A549 (cell line): ENCODE measurements at regions of chr20 and their contacts with region 1.

Region 1: DNA sequence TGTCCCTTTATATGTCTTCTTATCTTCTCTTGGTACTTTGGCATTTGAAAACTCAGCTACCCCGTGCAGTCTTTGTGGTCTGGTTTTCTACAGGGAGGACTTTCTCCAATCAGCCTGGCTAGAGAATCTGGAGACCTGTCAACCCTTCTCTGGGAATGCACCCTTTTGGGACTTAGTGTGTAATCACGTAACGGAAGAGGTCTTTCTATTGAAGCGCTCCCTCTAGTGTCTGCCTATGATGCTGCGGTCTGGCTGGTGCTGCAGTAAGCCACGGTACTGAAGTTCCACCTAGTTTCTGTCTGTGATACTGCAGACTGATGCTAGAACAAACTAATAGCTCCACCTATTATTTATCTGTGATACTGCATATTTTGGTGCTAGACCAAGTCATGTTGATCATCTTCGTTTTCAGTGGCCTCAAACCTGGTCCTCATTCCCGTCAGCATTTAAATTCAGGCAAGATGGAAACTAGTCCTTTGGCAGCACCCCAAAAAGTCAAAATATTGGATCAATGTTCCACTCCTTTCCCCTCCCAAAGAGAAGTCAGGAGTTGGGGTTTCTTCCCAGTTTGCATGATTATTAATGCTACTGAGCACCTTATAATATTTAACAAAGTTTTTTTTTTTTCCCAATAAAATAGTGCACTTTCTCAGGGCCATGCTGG is 12.5 kb upstream of the SIRPB2 start:
- DNase-seq: peak; percentile 95
- ATAC-seq: peak; percentile 98 to 100
- H3K4me3 ChIP-seq: no peak overlapping the region
- H3K27ac ChIP-seq: no peak overlapping the region
- H3K4me1 ChIP-seq: peaks cover 9% of the 10 kb centered on the region; the same call in 1 of the 3 replicates
- CTCF ChIP-seq: peak; percentile 100
- EP300 ChIP-seq: no peak
- POLR2A ChIP-seq: no peak
- RAD21 ChIP-seq: peak; percentile 98 to 99

Region 2: DNA sequence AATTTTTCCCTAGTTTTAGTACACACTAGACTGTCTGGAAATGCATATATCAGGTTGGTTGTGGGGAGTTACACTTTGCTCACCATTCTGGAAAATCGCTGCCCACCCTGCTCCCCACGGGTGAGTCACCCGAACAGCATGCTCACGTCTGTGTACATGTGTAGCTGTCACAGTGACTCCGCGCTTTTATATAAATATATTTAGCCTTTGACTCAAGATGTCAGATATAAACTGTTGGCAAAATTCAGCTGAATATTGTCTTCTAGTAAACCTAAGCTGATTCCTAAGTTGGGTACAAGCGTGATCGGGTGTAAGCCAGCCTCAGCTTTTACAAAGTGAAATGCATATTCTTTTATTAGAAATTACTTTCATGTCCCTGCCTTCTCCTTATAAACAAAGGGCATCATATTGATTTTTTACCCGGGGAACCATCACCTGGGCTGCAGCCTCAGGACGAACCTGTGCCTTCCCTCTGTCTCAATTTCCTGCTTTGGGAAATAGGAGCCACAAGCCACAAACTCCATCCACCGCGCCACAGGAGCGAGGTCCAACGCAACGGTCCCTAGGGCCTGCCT is 179.0 kb before region 1 on chr20:
- CTCF ChIA-PET with region 1: interaction called, 16 read pairs
- POLR2A ChIA-PET with region 1: interaction called, 3 read pairs
- DNase-seq: peak; percentile 42 to 64
- ATAC-seq: peak; percentile 45 to 48
- H3K4me3 ChIP-seq: peak overlapping the region; percentile 97
- H3K27ac ChIP-seq: peak overlapping the region; percentile 97 to 99
- H3K4me1 ChIP-seq: peaks cover 37% of the 10 kb centered on the region
- CTCF ChIP-seq: no peak
- EP300 ChIP-seq: no peak
- POLR2A ChIP-seq: no peak
- RAD21 ChIP-seq: no peak

Region 3: GRCh38 chr20:1381753-1382591 is 121.7 kb before region 1 on chr20:
- CTCF ChIA-PET with region 1: interaction called, 16 read pairs
- POLR2A ChIA-PET with region 1: no interaction called
- DNase-seq: no peak
- ATAC-seq: no peak
- H3K4me3 ChIP-seq: no peak overlapping the region
- H3K27ac ChIP-seq: no peak overlapping the region
- H3K4me1 ChIP-seq: peaks cover 29% of the 10 kb centered on the region; the same call in 2 of the 3 replicates
- CTCF ChIP-seq: no peak
- EP300 ChIP-seq: no peak
- POLR2A ChIP-seq: no peak
- RAD21 ChIP-seq: no peak

Region 4: DNA sequence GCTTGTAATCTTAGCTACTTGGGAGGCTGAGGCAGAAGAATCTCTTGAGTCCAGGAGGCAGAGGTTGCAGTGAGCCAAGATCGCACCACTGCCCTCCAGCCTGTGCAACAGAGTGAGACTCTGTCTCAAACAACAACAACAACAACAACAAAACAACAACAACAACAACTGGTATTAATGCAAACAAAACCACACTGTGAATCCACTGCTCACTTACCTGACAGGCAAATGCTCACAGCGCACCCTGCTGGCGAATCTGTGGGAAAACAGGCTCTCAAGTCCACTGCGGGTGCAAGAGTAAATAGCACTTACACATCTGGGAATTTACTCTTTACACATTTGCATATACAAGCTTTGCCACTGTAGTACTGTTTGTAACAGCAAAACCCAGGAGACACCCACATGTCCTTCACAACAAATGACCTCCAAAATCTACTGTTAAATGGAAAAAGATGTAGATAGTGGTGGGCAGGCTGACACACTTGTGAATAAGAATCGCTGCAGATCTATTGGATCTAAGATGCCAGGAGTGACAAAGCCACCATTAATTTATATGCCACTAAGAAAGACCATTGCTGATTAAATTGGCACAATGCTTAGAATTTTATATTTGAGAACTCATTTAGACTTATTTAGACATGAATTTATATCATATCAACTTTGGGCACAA is 66.3 kb before region 1 on chr20:
- CTCF ChIA-PET with region 1: interaction called, 29 read pairs
- POLR2A ChIA-PET with region 1: no interaction called
- DNase-seq: peak; percentile 85 to 91
- ATAC-seq: peak; percentile 68 to 83; a peak in 4 of 6 replicates
- H3K4me3 ChIP-seq: no peak overlapping the region
- H3K27ac ChIP-seq: no peak overlapping the region
- H3K4me1 ChIP-seq: no peaks in the 10 kb centered on the region
- CTCF ChIP-seq: peak; percentile 96
- EP300 ChIP-seq: no peak
- POLR2A ChIP-seq: no peak
- RAD21 ChIP-seq: peak; percentile 86 to 90

Region 5: GRCh38 chr20:1474825-1475603 is 28.7 kb before region 1 on chr20:
- CTCF ChIA-PET with region 1: interaction called, 306 read pairs
- POLR2A ChIA-PET with region 1: no interaction called
- DNase-seq: peak in 1 of 2 experiments; percentile 38
- ATAC-seq: peak; percentile 26 to 35; a peak in 3 of 6 replicates
- H3K4me3 ChIP-seq: no peak overlapping the region
- H3K27ac ChIP-seq: no peak overlapping the region
- H3K4me1 ChIP-seq: peaks cover 32% of the 10 kb centered on the region
- CTCF ChIP-seq: peak; percentile 39
- EP300 ChIP-seq: no peak
- POLR2A ChIP-seq: no peak
- RAD21 ChIP-seq: peak; percentile 50 to 68

Region 6: DNA sequence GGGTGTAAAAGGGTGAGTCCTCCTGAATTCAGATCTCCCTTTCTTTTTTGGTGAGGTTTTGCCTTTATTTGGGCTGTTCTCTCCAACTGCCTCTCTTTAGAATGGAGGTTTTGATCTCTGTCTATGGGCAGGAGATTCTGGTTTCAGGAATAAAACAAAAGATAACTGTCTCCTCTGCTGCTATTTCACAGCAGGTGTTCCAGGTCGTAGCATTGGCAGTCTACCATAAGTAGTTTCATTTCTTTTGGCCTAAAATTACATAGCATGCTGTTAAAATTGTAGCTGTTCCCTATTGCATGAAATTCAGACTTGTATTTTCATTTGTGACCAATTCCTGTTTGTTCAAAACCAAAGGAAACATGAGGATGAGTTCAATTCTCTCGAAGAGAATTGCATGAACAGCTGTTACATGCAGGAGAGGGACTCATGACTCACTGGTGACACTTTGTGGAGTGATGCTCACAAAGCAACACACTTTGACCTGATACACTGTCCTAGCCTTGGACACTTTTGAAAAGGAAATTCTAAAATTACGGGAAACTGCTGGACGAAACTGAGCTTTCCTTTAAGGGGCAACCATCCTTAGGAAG is 230.7 kb after region 1 on chr20:
- CTCF ChIA-PET with region 1: interaction called, 12 read pairs
- POLR2A ChIA-PET with region 1: no interaction called
- DNase-seq: peak in 1 of 2 experiments; percentile 35
- ATAC-seq: peak; percentile 67 to 70; a peak in 4 of 6 replicates
- H3K4me3 ChIP-seq: no peak overlapping the region
- H3K27ac ChIP-seq: no peak overlapping the region
- H3K4me1 ChIP-seq: no peaks in the 10 kb centered on the region
- CTCF ChIP-seq: peak; percentile 32; the same call in 2 of the 3 replicates
- EP300 ChIP-seq: no peak
- POLR2A ChIP-seq: no peak
- RAD21 ChIP-seq: peak; percentile 44 to 56; a peak in 4 of 5 replicates